ENCODE measurements at regions of chr9 and their contacts with region 1.

Region 1: GRCh38 chr9:22041792-22042191 is 32.7 kb upstream of the CDKN2B start:
- DNase-seq: peak in 2 of 3 donors; percentile 52 to 91
- ATAC-seq: peak; percentile 93
- H3K4me3 ChIP-seq: no peak overlapping the region
- H3K4me1 ChIP-seq: peaks cover 16% of the 10 kb centered on the region
- CTCF ChIP-seq: no peak

Region 2: GRCh38 chr9:21964925-21965385 is 76.8 kb before region 1 on chr9:
- intact Hi-C with region 1: no loop called
- DNase-seq: peak; percentile 53 to 69 (median 68)
- ATAC-seq: peak; percentile 84
- H3K4me3 ChIP-seq: no peak overlapping the region
- H3K4me1 ChIP-seq: peaks cover 13% of the 10 kb centered on the region
- CTCF ChIP-seq: no peak

Region 3: GRCh38 chr9:22088718-22089064 is 46.9 kb after region 1 on chr9:
- intact Hi-C with region 1: no loop called
- DNase-seq: peak in 2 of 3 donors; percentile 35 to 76
- ATAC-seq: peak; percentile 92
- H3K4me3 ChIP-seq: no peak overlapping the region
- H3K4me1 ChIP-seq: peaks cover 16% of the 10 kb centered on the region
- CTCF ChIP-seq: no peak

Region 4: DNA sequence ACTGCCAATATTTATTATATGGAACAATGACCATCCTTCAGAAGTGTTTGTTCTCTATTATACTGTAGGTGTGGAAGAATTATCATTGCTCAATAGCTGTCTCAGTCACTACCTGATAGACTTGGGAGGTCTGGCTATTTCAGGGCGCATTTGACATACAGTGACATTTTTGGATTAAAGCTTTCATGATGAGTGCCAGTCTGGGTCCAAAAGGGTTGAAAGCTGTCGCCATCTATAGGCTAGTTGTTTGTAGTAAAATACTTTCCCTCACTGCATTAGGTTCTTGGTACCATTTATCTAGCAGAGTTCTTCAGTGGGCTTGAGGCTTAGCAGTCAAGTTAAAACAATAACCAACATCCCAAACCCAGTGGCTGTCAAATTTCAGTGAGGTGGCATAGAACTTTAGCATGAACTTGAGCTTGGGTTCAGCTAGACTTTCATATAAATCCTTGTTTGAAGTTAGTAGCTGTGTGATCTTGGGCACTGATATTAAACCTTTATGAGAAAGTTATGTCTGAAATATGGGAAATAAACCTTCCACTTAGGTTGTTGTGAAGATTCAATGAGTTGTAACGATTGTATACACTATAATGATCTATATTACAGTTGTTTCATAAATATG is 77.9 kb after region 1 on chr9:
- intact Hi-C with region 1: loop called in 1 of 2 experiments (anchors 5 kb)
- DNase-seq: peak in 1 of 3 donors; percentile 50
- ATAC-seq: peak; percentile 29
- H3K4me3 ChIP-seq: no peak overlapping the region
- H3K4me1 ChIP-seq: peaks cover 24% of the 10 kb centered on the region
- CTCF ChIP-seq: no peak

Measured in mucosa of descending colon (tissue), 3 donors.